ENCODE measurements at regions of chr14 and their contacts with region 1.

Region 1: DNA sequence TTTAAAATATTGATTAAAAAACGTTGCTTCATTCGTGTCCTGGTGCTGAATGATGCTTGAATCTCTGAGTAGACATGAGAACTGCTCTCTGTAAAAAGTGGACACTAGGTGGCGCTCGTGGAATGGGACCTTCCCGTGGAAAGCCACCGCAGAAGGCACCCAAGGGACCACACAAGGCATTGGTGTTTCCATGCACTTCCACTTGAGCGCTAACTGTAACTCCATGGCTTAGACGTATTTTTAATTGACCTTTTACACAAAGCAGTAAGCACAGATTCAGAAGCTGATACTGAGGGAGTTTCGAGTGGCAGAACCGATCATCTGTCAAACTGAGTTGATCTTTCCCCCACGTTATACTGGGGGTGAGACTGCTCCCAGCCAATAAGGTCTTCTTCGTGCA is 135.3 kb downstream of the PRKCH start:
- DNase-seq: peak; percentile 94
- H3K4me3 Mint-ChIP-seq: no peak overlapping the region
- H3K27ac Mint-ChIP-seq: peak overlapping the region; percentile 39
- H3K4me1 Mint-ChIP-seq: peaks cover 74% of the 10 kb centered on the region
- H3K27me3 Mint-ChIP-seq: no peaks in the 10 kb centered on the region

Region 2: GRCh38 chr14:60632777-60633176 is 823.9 kb before region 1 on chr14:
- intact Hi-C with region 1: no loop called
- DNase-seq: no peak
- H3K4me3 Mint-ChIP-seq: no peak overlapping the region
- H3K27ac Mint-ChIP-seq: no peak overlapping the region
- H3K4me1 Mint-ChIP-seq: peaks cover 9% of the 10 kb centered on the region
- H3K27me3 Mint-ChIP-seq: peaks cover 53% of the 10 kb centered on the region

Region 3: GRCh38 chr14:61296719-61297502 is 159.8 kb before region 1 on chr14:
- intact Hi-C with region 1: loop called (anchors 1 kb)
- DNase-seq: peak; percentile 78
- H3K4me3 Mint-ChIP-seq: no peak overlapping the region
- H3K27ac Mint-ChIP-seq: no peak overlapping the region
- H3K4me1 Mint-ChIP-seq: peaks cover 30% of the 10 kb centered on the region
- H3K27me3 Mint-ChIP-seq: no peaks in the 10 kb centered on the region

Region 4: DNA sequence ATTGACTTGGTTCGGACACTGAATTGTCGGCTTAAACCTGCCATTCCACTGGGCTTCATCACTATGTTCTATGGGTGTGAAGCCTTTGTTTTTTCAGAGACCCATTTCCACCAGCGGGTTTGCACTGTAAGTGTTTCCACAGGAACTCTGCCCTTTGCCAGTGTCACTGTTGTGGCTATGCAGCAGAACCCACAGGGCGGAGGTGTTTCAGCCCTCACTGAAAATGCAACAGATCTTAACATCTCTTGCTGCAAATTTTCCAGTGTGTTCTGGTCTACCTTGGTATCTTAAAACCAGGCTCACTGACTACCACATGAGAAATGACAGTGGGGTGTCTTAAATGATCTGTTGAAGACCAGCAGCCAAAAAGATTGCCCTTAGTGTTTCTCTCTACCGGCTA is 114.2 kb before region 1 on chr14:
- intact Hi-C with region 1: loop called (anchors 2 kb)
- DNase-seq: peak; percentile 96
- H3K4me3 Mint-ChIP-seq: peak overlapping the region; percentile 86
- H3K27ac Mint-ChIP-seq: peak overlapping the region; percentile 95
- H3K4me1 Mint-ChIP-seq: peaks cover 80% of the 10 kb centered on the region
- H3K27me3 Mint-ChIP-seq: no peaks in the 10 kb centered on the region

Region 5: DNA sequence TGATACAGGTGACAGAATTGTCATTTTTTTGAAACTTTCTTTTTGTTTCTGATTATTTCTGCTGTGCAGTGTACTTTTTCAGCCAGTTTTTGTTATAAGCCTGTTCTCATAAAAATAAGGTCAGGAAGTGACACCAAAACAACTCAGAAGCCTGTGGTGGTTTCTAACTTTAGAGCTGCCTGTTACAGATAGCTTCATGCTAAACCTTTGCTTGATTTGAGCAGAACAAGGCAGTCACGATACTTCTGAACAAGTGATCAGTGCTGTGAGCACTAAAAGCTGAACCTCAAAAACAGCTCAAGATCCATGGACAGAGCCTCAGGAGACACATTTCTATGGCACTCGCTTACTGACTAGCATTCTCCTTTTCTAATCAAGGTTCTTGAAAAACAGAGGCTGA is 53.3 kb before region 1 on chr14:
- intact Hi-C with region 1: loop called (anchors 2 kb)
- DNase-seq: peak; percentile 85
- H3K4me3 Mint-ChIP-seq: peak overlapping the region; percentile 71
- H3K27ac Mint-ChIP-seq: peak overlapping the region; percentile 90
- H3K4me1 Mint-ChIP-seq: peaks cover 65% of the 10 kb centered on the region
- H3K27me3 Mint-ChIP-seq: no peaks in the 10 kb centered on the region

Region 6: GRCh38 chr14:61475316-61475715 is 18.6 kb after region 1 on chr14:
- intact Hi-C with region 1: loop called (anchors 1 kb)
- DNase-seq: peak; percentile 79
- H3K4me3 Mint-ChIP-seq: peak overlapping the region; percentile 39
- H3K27ac Mint-ChIP-seq: peak overlapping the region; percentile 87
- H3K4me1 Mint-ChIP-seq: peaks cover 85% of the 10 kb centered on the region
- H3K27me3 Mint-ChIP-seq: no peaks in the 10 kb centered on the region

Measured in activated CD4-positive, alpha-beta T cell treated with anti-CD3 and anti-CD28 coated beads, Interleukin-2, amount 10 ng/mL, durations not matched to agents 24 days and 14 days (primary cell).